ENCODE measurements at regions of chr20 and their contacts with region 1.

Region 1: GRCh38 chr20:19903168-19903811 is 113.9 kb upstream of the NAA20 start:
- DNase-seq: peak; percentile 80
- ATAC-seq: peak; percentile 90
- H3K4me3 ChIP-seq: no peak overlapping the region
- H3K4me3 Mint-ChIP-seq: no peak overlapping the region
- H3K27ac ChIP-seq: no peak overlapping the region
- H3K27ac Mint-ChIP-seq: peak overlapping the region; percentile 17
- H3K4me1 ChIP-seq: peaks cover 7 to 10% of the 10 kb centered on the region in 2 donors
- H3K4me1 Mint-ChIP-seq: peaks cover 11% of the 10 kb centered on the region
- H3K27me3 ChIP-seq: no peaks in the 10 kb centered on the region
- H3K27me3 Mint-ChIP-seq: peaks cover 8% of the 10 kb centered on the region
- CTCF ChIP-seq: peak; percentile 48

Region 2: GRCh38 chr20:19231359-19232035 is 671.8 kb before region 1 on chr20:
- CTCF ChIA-PET with region 1: no interaction called
- POLR2A ChIA-PET with region 1: no interaction called
- intact Hi-C with region 1: no loop called
- DNase-seq: no peak
- ATAC-seq: no peak
- H3K4me3 ChIP-seq: no peak overlapping the region
- H3K4me3 Mint-ChIP-seq: no peak overlapping the region
- H3K27ac ChIP-seq: no peak overlapping the region
- H3K27ac Mint-ChIP-seq: no peak overlapping the region
- H3K4me1 ChIP-seq: no peaks in the 10 kb centered on the region
- H3K4me1 Mint-ChIP-seq: no peaks in the 10 kb centered on the region
- H3K27me3 ChIP-seq: no peaks in the 10 kb centered on the region
- H3K27me3 Mint-ChIP-seq: peaks cover 26% of the 10 kb centered on the region
- CTCF ChIP-seq: no peak

Region 3: GRCh38 chr20:19934792-19935491 is 31.7 kb after region 1 on chr20:
- CTCF ChIA-PET with region 1: interaction called, 6 read pairs
- POLR2A ChIA-PET with region 1: no interaction called
- intact Hi-C with region 1: loop called (anchors 5 kb)
- DNase-seq: peak; percentile 81
- ATAC-seq: peak; percentile 64
- H3K4me3 ChIP-seq: peak overlapping the region in 4 of 5 experiments; percentile 14 to 57 (median 36)
- H3K4me3 Mint-ChIP-seq: peak overlapping the region; percentile 78
- H3K27ac ChIP-seq: peak overlapping the region; percentile 31 to 39
- H3K27ac Mint-ChIP-seq: peak overlapping the region; percentile 32
- H3K4me1 ChIP-seq: peaks cover 31 to 34% of the 10 kb centered on the region in 2 donors
- H3K4me1 Mint-ChIP-seq: peaks cover 46% of the 10 kb centered on the region
- H3K27me3 ChIP-seq: no peaks in the 10 kb centered on the region
- H3K27me3 Mint-ChIP-seq: no peaks in the 10 kb centered on the region
- CTCF ChIP-seq: no peak

Region 4: GRCh38 chr20:19995220-19995863 is 92.1 kb after region 1 on chr20:
- CTCF ChIA-PET with region 1: interaction called, 87 read pairs
- POLR2A ChIA-PET with region 1: no interaction called
- intact Hi-C with region 1: loop called (anchors 1 kb)
- DNase-seq: peak; percentile 74
- ATAC-seq: peak; percentile 45
- H3K4me3 ChIP-seq: no peak overlapping the region
- H3K4me3 Mint-ChIP-seq: no peak overlapping the region
- H3K27ac ChIP-seq: no peak overlapping the region
- H3K27ac Mint-ChIP-seq: no peak overlapping the region
- H3K4me1 ChIP-seq: no peaks in the 10 kb centered on the region
- H3K4me1 Mint-ChIP-seq: no peaks in the 10 kb centered on the region
- H3K27me3 ChIP-seq: no peaks in the 10 kb centered on the region
- H3K27me3 Mint-ChIP-seq: peaks cover 10% of the 10 kb centered on the region
- CTCF ChIP-seq: peak; percentile 94